ENCODE measurements at regions of chr15 and their contacts with region 1.

Region 1: DNA sequence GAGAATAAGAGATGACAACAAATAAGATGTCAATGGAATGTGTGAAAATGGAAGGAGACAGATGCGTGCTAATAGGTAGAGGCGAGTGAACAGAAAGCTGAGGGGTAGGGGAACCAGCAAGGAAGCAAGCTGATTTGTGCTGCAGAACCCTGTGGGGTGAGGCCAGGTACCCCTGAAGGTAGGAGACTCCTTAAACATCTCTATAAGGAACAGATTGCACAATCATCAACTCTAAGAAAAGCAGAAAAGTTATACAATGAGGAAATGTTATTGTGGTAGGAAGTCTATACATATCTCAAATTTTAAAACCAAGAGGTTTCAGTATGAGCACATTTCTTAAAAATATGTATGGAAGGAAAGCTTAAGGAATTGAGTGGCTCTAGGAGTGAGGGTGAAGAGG is 315.0 kb upstream of the TPM1 start:
- DNase-seq: no peak
- ATAC-seq: no peak
- H3K4me3 ChIP-seq: no peak overlapping the region
- H3K4me3 Mint-ChIP-seq: no peak overlapping the region
- H3K27ac ChIP-seq: no peak overlapping the region
- H3K27ac Mint-ChIP-seq: no peak overlapping the region
- H3K4me1 ChIP-seq: no peaks in the 10 kb centered on the region
- H3K4me1 Mint-ChIP-seq: no peaks in the 10 kb centered on the region
- H3K27me3 ChIP-seq: no peaks in the 10 kb centered on the region
- H3K27me3 Mint-ChIP-seq: peaks cover 15% of the 10 kb centered on the region
- CTCF ChIP-seq: no peak

Region 2: GRCh38 chr15:62706317-62706716 is 21.2 kb before region 1 on chr15:
- CTCF ChIA-PET with region 1: no interaction called
- POLR2A ChIA-PET with region 1: no interaction called
- intact Hi-C with region 1: no loop called
- DNase-seq: no peak
- ATAC-seq: no peak
- H3K4me3 ChIP-seq: no peak overlapping the region
- H3K4me3 Mint-ChIP-seq: no peak overlapping the region
- H3K27ac ChIP-seq: no peak overlapping the region
- H3K27ac Mint-ChIP-seq: no peak overlapping the region
- H3K4me1 ChIP-seq: no peaks in the 10 kb centered on the region
- H3K4me1 Mint-ChIP-seq: no peaks in the 10 kb centered on the region
- H3K27me3 ChIP-seq: no peaks in the 10 kb centered on the region
- H3K27me3 Mint-ChIP-seq: no peaks in the 10 kb centered on the region
- CTCF ChIP-seq: no peak

Region 3: DNA sequence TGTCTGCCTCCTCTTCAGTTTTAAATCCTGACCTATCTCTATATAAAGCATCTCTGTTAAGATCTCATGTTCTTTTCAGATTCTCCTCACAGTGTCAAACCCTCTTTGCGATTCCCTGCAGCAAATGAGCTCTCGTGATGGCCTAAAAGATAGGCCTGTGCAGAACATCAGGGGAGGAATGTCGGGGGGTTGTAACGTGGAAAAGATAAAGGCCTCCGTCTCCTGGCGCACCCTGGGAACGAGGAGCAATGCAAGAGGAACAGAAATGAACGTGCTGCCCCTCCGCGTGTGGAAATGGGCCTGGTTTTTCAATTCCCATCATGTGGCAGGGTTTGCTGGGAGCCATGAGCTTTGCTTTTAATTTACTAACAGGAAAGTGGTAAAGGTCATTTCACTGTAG is 30.0 kb after region 1 on chr15:
- CTCF ChIA-PET with region 1: no interaction called
- POLR2A ChIA-PET with region 1: no interaction called
- intact Hi-C with region 1: loop called in 1 of 2 experiments (anchors 1 kb)
- DNase-seq: no peak
- ATAC-seq: no peak
- H3K4me3 ChIP-seq: no peak overlapping the region
- H3K4me3 Mint-ChIP-seq: no peak overlapping the region
- H3K27ac ChIP-seq: no peak overlapping the region
- H3K27ac Mint-ChIP-seq: no peak overlapping the region
- H3K4me1 ChIP-seq: no peaks in the 10 kb centered on the region
- H3K4me1 Mint-ChIP-seq: no peaks in the 10 kb centered on the region
- H3K27me3 ChIP-seq: peaks cover 0 to 4% of the 10 kb centered on the region in 2 experiments
- H3K27me3 Mint-ChIP-seq: peaks cover 5% of the 10 kb centered on the region
- CTCF ChIP-seq: no peak

Measured in CD4-positive, alpha-beta T cell (primary cell).